ENCODE measurements at regions of chr1 and their contacts with region 1.

Region 1: GRCh38 chr1:184973272-184974055 is 844 bp downstream of the NIBAN1 start:
- DNase-seq: peak; percentile 76
- H3K4me3 ChIP-seq: peak overlapping the region; percentile 81 to 99 (median 92)
- H3K27ac ChIP-seq: peak overlapping the region; percentile 87 to 96 (median 94)
- H3K4me1 ChIP-seq: peaks cover 0 to 39% (median 36%) of the 10 kb centered on the region in 4 donors
- H3K27me3 ChIP-seq: no peaks in the 10 kb centered on the region
- CTCF ChIP-seq: peak in 1 of 4 experiments; percentile 9
- EP300 ChIP-seq: no peak
- POLR2A ChIP-seq: no peak

Region 2: GRCh38 chr1:183635606-183636333 is 1337.7 kb before region 1 on chr1 and contains the start of gene ARPC5:
- intact Hi-C with region 1: loop called (anchors 10 kb)
- DNase-seq: peak; percentile 98
- H3K4me3 ChIP-seq: peak within 1 kb of the TSS; percentile 65 to 96 (median 86)
- H3K27ac ChIP-seq: peak within 1 kb of the TSS; percentile 96 to 99 (median 98)
- H3K4me1 ChIP-seq: peaks cover 0 to 34% (median 28%) of the 10 kb centered on the region in 4 donors
- H3K27me3 ChIP-seq: no peaks in the 10 kb centered on the region
- CTCF ChIP-seq: no peak
- EP300 ChIP-seq: peak in 1 of 4 donors; percentile 3
- POLR2A ChIP-seq: peak; percentile 95 to 98
- total RNA-seq, gene ARPC5: 57.3 to 95.6 (median 90.1) TPM

Region 3: GRCh38 chr1:184002071-184002470 is 971.4 kb before region 1 on chr1:
- intact Hi-C with region 1: no loop called
- DNase-seq: no peak
- H3K4me3 ChIP-seq: no peak overlapping the region
- H3K27ac ChIP-seq: peak overlapping the region in 3 of 4 donors; percentile 36 to 66 (median 52)
- H3K4me1 ChIP-seq: peaks cover 0 to 17% (median 8%) of the 10 kb centered on the region in 4 donors
- H3K27me3 ChIP-seq: no peaks in the 10 kb centered on the region
- CTCF ChIP-seq: no peak
- EP300 ChIP-seq: no peak
- POLR2A ChIP-seq: no peak

Region 4: DNA sequence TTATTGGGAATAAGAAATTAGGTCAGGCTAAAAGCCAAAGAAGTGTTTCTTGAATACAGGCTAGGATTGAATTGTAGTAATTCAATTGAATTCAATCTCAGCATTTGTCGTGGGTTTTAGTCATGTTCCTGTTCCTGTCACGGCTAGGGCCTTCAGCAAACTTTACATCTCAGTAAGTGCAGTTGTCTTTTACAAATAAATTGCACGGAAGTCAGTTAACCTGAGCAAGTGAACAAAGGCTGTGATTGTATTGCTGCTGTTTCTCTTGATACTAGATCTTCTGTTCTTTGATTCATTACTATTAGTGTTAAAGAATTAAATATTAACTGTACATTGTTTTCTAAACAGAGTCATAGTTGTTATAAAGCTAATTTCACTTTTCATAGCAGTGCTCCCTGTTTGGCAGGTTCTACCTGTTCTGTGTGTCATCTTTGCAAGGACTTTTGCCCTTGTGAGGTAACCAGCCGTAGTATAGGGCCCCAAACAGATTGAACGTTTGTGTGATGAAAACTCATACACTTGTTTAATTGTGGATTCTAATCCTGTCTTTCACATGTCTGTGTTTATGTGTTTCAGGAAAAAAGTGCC is 383.2 kb before region 1 on chr1:
- intact Hi-C with region 1: no loop called
- DNase-seq: no peak
- H3K4me3 ChIP-seq: no peak overlapping the region
- H3K27ac ChIP-seq: no peak overlapping the region
- H3K4me1 ChIP-seq: no peaks in the 10 kb centered on the region
- H3K27me3 ChIP-seq: no peaks in the 10 kb centered on the region
- CTCF ChIP-seq: no peak
- EP300 ChIP-seq: no peak
- POLR2A ChIP-seq: no peak

Region 5: DNA sequence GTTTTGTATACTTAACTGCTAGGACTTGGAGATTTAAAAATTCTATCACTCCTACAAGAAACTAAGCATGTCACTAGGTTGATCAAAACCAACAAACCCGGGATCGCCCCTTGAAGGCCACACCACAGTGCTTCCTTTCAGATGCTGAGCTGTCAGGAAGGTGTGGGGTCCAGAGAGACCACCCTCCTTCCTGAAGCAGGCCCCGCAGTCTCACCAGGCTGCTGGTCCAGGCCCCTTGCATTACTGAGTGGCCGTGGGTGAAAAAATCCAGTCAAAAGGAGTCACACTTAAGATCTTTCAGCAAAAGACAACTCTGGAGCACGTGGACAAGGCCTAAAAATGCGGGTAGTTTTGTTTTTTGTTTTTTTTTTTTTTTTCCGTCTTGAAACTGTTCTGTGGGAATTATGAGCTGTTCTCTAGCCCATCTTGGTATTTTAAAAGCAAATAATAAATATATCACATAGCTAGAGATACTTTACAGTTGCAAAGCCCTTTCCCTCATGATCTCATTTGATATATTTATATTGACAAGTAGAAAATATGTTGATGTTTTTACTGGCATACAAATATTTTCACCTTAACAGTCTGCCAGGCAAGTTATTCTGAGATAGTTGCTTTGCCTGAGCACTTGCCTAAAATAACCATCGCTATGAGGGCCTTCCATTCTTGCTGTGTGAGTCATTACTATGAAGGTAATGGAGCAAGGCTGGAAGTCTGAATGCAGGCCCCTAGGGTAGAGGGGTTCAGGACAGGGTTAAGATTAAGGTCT is 145.7 kb before region 1 on chr1:
- intact Hi-C with region 1: loop called (anchors 5 kb)
- DNase-seq: no peak
- H3K4me3 ChIP-seq: no peak overlapping the region
- H3K27ac ChIP-seq: peak overlapping the region; percentile 72 to 86 (median 82)
- H3K4me1 ChIP-seq: peaks cover 0 to 69% (median 62%) of the 10 kb centered on the region in 4 donors
- H3K27me3 ChIP-seq: no peaks in the 10 kb centered on the region
- CTCF ChIP-seq: no peak
- EP300 ChIP-seq: no peak
- POLR2A ChIP-seq: no peak

Region 6: GRCh38 chr1:184881941-184882913 is 91.2 kb before region 1 on chr1:
- intact Hi-C with region 1: loop called (anchors 5 kb)
- DNase-seq: peak; percentile 87
- H3K4me3 ChIP-seq: no peak overlapping the region
- H3K27ac ChIP-seq: peak overlapping the region; percentile 80 to 92 (median 84)
- H3K4me1 ChIP-seq: peaks cover 0 to 100% (median 88%) of the 10 kb centered on the region in 4 donors
- H3K27me3 ChIP-seq: no peaks in the 10 kb centered on the region
- CTCF ChIP-seq: no peak
- EP300 ChIP-seq: peak in 2 of 4 donors; percentile 57 to 79
- POLR2A ChIP-seq: no peak